ENCODE measurements at regions of chr10 and their contacts with region 1.

Region 1: GRCh38 chr10:124418726-124419501 is at the start of gene OAT:
- DNase-seq: peak; percentile 97
- H3K4me3 Mint-ChIP-seq: peak within 1 kb of the TSS; percentile 77
- H3K27ac Mint-ChIP-seq: peak within 1 kb of the TSS; percentile 49
- H3K4me1 Mint-ChIP-seq: peaks cover 12% of the 10 kb centered on the region
- H3K27me3 Mint-ChIP-seq: peaks cover 8% of the 10 kb centered on the region
- total RNA-seq, gene OAT: 20.7 to 21.3 TPM

Region 2: DNA sequence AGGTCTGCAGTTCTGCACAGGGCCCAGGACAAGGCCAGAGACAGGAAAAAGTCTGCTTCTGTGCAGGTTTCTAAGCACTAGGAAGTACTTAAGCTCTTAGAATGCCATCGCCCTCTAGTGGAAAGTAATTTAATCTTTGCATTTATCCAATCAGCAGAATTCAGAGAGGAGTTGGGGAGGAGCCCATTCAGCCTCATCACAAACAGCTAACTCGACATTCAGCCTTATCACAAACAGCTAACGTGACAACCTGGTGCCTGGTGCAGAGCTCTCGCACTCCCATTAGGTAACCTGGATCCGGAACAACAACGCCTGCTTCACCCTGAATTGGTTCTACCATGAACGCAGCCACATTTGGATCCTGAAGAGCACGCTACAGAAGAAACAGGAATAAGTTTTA is 15.4 kb before region 1 on chr10:
- CTCF ChIA-PET with region 1: interaction called, 17 read pairs
- POLR2A ChIA-PET with region 1: interaction called, 4 read pairs
- DNase-seq: peak; percentile 36
- H3K4me3 Mint-ChIP-seq: no peak overlapping the region
- H3K27ac Mint-ChIP-seq: peak overlapping the region; percentile 55
- H3K4me1 Mint-ChIP-seq: peaks cover 9% of the 10 kb centered on the region
- H3K27me3 Mint-ChIP-seq: no peaks in the 10 kb centered on the region

Region 3: DNA sequence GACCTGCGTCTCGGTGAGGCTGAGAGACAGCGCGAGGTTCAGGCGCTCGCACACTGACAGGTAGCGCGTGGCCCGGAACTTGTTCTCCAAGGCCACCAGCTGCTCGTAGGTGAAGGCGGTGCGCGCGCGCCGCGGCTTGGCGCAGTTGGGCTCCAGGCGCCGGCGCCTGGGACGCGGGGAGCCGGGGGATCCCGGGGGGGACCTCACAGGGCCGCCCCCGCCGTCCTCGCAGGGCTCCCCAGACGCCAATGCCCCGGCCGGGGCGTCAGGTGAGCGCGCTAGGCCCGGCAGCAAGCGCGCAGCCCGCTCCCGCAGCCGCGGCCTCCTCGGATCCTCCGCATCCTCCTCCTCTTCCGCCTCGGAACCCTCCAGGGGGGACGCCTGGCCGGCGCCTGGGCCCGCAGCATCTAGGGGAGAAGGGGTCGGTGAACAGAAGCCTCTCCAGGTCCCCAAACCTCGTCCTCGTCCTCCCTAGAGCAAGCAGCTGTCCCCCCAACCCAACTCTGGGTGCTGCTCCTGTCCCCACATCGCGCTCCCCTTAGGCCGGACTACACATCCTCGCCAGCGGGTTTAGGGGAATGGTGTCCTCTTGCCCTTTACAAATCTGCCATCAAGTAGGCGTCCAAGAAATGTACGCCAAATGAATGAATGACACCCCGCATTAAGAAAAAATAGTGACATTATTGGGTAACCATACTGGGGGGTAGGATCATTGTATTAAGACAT is 29.0 kb after region 1 on chr10:
- CTCF ChIA-PET with region 1: no interaction called
- POLR2A ChIA-PET with region 1: no interaction called
- DNase-seq: no peak
- H3K4me3 Mint-ChIP-seq: no peak overlapping the region
- H3K27ac Mint-ChIP-seq: no peak overlapping the region
- H3K4me1 Mint-ChIP-seq: peaks cover 16% of the 10 kb centered on the region
- H3K27me3 Mint-ChIP-seq: peaks cover 71% of the 10 kb centered on the region

Measured in activated CD4-positive, alpha-beta memory T cell treated with anti-CD3 and anti-CD28 coated beads, Interleukin-2, amount 10 ng/mL, durations not matched to agents 7 days and 5 days (primary cell).